ENCODE measurements at regions of chr2 and their contacts with region 1.

Region 1: GRCh38 chr2:18299423-18300212 is 260.8 kb downstream of the RDH14 start:
- DNase-seq: peak; percentile 71 to 99
- H3K4me3 ChIP-seq: peak overlapping the region; percentile 40
- H3K27ac ChIP-seq: peak overlapping the region; percentile 80
- H3K4me1 ChIP-seq: peaks cover 34% of the 10 kb centered on the region
- H3K27me3 ChIP-seq: no peaks in the 10 kb centered on the region
- CTCF ChIP-seq: no peak

Region 2: DNA sequence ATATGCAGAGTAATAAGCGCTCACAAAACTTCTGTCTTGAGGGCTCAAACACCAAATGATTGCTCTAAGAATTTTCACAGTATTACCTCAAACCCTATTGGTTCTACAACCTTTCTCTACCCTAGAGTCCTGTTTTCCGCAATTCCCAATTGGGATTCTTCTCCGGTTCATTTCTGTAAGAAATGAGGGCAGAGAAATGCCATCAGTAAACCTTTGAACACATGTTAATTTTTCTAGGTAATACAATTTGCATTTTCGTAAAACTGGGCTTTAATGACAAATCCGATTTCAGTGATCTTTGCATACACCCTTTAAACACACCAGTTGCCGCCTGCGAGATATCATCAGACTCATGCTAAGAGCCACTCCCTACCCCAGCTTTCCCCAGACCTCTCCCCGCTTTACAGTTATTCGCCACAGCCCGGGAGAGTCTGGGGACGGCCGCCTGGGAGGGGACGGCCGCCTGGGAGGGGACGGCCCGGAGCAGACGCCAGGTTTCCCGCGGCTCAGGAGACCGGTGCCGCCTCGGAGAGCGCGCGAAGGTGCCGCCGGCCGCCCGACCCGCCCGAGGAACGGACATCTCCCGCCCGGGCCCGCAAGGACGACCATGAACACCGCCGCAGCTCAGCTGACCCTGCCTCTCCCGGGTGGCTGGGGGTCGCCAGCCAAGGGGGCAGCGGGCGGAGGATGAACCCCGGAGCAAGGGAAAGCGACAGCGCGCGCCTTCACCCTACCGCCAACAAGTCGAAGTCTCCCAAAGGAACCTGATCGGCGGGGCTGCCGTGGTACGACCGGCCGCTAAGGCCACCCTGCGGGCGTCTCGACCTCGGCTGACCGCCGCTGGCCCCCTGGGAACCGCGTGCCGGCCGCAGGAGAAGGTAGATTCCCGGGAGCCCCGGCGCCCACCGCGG is 546.5 kb before region 1 on chr2:
- CTCF ChIA-PET with region 1: no interaction called
- POLR2A ChIA-PET with region 1: no interaction called
- intact Hi-C with region 1: no loop called
- DNase-seq: peak; percentile 48 to 57
- H3K4me3 ChIP-seq: peak overlapping the region; percentile 96
- H3K27ac ChIP-seq: peak overlapping the region; percentile 93
- H3K4me1 ChIP-seq: peaks cover 28% of the 10 kb centered on the region
- H3K27me3 ChIP-seq: no peaks in the 10 kb centered on the region
- CTCF ChIP-seq: no peak

Region 3: GRCh38 chr2:18219676-18220075 is 79.9 kb before region 1 on chr2:
- CTCF ChIA-PET with region 1: no interaction called
- POLR2A ChIA-PET with region 1: no interaction called
- intact Hi-C with region 1: no loop called
- DNase-seq: no peak
- H3K4me3 ChIP-seq: no peak overlapping the region
- H3K27ac ChIP-seq: no peak overlapping the region
- H3K4me1 ChIP-seq: no peaks in the 10 kb centered on the region
- H3K27me3 ChIP-seq: no peaks in the 10 kb centered on the region
- CTCF ChIP-seq: no peak; the same call in 1 of the 2 replicates

Region 4: DNA sequence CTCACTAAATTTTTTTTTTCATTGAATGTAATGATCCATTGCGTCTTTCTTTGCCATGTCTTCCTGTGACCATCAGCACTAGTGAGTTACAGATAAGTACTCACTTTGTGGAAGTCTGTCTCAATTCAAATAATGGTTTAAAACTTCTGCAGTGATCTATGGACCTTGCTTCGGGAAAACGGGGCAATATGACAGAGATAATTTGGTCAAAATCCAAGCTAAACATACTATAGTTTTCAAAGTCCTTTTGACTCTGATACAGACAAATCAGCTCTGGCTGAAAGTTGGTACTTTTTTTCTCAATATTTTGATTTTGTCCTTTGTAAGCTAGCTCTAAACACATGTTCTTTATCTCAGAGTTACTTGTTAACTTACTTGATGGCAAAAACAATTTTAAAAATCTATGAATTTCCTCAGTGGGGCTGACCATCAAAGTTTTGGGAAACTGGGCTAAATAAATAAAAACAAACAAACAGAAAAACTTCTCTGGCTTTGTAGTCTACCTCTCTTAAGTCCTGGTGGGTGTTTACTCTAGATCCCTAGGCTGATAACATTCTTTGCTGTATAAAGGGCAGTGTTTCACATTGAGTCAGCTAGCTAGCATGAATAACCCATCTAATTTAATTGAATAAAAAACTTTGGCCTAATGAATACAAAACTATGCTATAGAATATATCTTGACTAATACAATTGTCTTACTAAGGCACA is 66.7 kb before region 1 on chr2:
- CTCF ChIA-PET with region 1: no interaction called
- POLR2A ChIA-PET with region 1: no interaction called
- intact Hi-C with region 1: loop called (anchors 1 kb)
- DNase-seq: peak in 1 of 2 experiments; percentile 89
- H3K4me3 ChIP-seq: no peak overlapping the region; the same call in 1 of the 2 replicates
- H3K27ac ChIP-seq: peak overlapping the region; percentile 46
- H3K4me1 ChIP-seq: peaks cover 29% of the 10 kb centered on the region
- H3K27me3 ChIP-seq: no peaks in the 10 kb centered on the region
- CTCF ChIP-seq: no peak

Region 5: DNA sequence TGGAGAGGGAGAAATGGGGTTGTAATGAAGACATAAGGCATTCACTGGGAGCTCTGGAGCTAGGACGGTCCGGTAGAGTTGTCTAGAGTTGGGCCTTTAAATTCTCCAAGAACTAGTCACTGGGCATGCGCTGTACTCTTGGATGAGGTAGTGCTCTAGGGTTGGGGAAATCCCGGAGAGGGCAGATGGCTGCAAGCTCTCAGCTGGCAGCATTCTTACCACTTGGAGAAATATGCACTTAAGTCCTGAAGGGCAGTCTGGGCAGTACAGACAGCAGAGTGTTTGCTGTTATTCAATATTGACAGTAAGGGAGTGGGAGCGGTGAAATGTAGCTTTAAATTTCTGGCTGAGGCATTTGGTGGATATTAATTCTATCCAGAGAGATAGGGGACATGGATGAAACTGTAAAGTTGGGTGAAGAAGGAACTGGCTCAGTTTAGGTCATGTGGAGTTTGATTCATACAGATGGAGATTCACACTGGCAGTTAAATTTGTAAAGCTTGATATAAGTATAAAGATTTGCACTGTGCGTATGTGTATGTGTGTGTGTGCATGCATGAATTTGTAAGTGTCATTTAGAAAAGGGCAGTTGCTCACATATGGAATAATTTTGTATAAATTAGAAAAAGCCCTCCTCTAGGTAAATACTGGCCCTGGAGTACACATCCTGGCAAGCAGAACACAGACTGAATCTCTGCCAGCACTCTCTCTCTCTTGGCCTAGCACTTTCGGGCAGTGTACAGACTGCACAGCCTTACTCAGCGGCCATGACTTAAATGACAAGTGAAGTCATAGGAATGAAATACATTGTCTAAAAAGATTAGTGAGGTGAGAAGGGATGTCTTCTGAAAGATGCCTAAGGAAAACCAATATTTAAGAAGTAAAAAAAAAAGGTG is 46.5 kb after region 1 on chr2:
- CTCF ChIA-PET with region 1: no interaction called
- POLR2A ChIA-PET with region 1: no interaction called
- intact Hi-C with region 1: loop called (anchors 5 kb)
- DNase-seq: peak in 1 of 2 experiments; percentile 2
- H3K4me3 ChIP-seq: no peak overlapping the region
- H3K27ac ChIP-seq: no peak overlapping the region
- H3K4me1 ChIP-seq: no peaks in the 10 kb centered on the region
- H3K27me3 ChIP-seq: no peaks in the 10 kb centered on the region
- CTCF ChIP-seq: no peak